ENCODE measurements at regions of chr12 and their contacts with region 1.

Region 1: GRCh38 chr12:116277393-116278278 is at the start of gene MED13L:
- DNase-seq: peak; percentile 87
- H3K4me3 ChIP-seq: peak within 1 kb of the TSS; percentile 63 to 72
- H3K27ac ChIP-seq: peak within 1 kb of the TSS; percentile 89 to 94
- H3K4me1 ChIP-seq: no peaks in the 10 kb centered on the region
- H3K27me3 ChIP-seq: no peaks in the 10 kb centered on the region
- CTCF ChIP-seq: peak; percentile 28 to 62 (median 52)
- POLR2A ChIP-seq: peak; percentile 31
- total RNA-seq, gene MED13L: 88.9 to 140 TPM

Region 2: GRCh38 chr12:115898670-115899069 is 379.0 kb before region 1 on chr12:
- intact Hi-C with region 1: no loop called
- DNase-seq: no peak
- H3K4me3 ChIP-seq: no peak overlapping the region
- H3K27ac ChIP-seq: no peak overlapping the region
- H3K4me1 ChIP-seq: no peaks in the 10 kb centered on the region
- H3K27me3 ChIP-seq: no peaks in the 10 kb centered on the region
- CTCF ChIP-seq: no peak
- POLR2A ChIP-seq: no peak

Region 3: GRCh38 chr12:116053479-116054200 is 224.0 kb before region 1 on chr12:
- intact Hi-C with region 1: no loop called
- DNase-seq: no peak
- H3K4me3 ChIP-seq: no peak overlapping the region
- H3K27ac ChIP-seq: no peak overlapping the region
- H3K4me1 ChIP-seq: no peaks in the 10 kb centered on the region
- H3K27me3 ChIP-seq: no peaks in the 10 kb centered on the region
- CTCF ChIP-seq: no peak
- POLR2A ChIP-seq: no peak

Region 4: DNA sequence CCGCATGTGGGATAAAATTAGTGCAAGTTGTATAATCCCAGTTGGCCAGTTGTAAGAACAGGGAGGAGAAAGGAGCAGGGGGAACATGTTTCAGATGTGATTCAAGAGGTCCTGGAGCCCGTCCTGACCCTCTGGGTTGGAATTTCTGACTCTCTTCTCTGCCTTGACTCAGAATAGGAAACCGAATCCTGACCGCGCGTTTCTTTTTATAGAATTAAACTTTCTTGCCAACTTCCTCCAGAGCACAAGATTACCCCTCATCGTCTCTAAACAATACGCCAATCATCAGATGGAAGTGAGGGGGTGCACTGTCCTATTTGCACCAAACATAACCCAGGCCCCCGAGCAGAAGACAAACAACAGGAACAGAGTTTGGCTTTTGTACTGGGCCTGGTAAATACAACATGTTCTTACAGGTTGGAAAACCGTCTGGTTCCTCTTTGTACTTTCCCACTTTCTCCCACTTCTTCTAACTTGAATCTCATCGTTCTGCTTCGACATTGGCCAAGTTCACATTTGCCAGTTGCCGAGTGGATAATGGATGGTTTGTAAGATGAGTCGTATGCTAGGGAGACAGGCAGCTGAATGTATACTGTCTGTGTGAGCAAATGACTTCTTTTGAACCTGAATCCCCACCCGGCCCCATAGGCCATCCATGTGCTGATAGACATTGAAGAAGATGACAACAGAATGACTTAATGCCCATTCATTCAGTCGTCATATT is 42.4 kb after region 1 on chr12:
- intact Hi-C with region 1: loop called (anchors 2 kb)
- DNase-seq: peak; percentile 70
- H3K4me3 ChIP-seq: no peak overlapping the region
- H3K27ac ChIP-seq: peak overlapping the region; percentile 60 to 81
- H3K4me1 ChIP-seq: peaks cover 2% of the 10 kb centered on the region
- H3K27me3 ChIP-seq: no peaks in the 10 kb centered on the region
- CTCF ChIP-seq: no peak
- POLR2A ChIP-seq: no peak

Region 5: DNA sequence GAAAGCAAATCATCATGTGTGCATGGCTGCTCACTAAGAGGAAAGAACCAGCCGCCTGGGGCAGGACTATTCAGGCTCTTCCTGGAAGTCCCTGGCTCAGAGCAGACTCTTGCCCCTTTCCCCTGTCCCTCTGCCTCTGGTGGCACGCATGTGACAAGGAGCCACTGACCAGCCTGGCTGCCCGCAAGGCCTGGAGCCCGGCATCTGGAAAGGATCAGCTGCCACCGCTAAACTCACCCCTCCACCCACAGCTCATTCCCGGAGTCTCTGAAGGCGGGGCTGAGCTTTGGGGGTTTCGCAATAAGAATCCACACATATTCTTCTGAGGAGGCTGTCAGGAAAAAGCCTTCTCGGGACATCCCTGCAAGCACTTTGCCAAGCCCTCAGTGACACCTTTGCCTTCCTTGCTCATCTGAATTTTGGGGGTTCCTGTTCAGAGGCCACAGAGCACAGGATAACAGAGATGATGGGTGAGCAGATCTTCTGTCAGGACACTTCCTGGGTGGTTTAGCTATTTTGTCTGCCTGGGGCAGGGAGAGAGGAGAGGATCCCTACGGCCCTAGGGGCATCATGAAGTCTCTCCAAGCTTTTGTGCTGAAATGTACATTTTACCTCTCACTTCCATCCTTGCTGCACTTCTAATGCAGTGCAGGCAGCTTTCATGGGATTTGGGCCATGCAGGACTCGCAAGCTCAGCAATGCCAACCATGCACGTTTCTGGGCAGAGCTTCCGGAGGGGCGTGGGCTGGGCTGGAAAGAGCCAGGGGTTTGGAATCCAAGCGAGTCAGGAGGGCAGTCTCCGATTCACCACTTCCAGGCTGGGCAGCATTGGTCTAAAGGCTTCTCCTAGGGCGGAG is 156.7 kb after region 1 on chr12:
- intact Hi-C with region 1: loop called (anchors 10 kb)
- DNase-seq: peak; percentile 80
- H3K4me3 ChIP-seq: no peak overlapping the region
- H3K27ac ChIP-seq: no peak overlapping the region
- H3K4me1 ChIP-seq: no peaks in the 10 kb centered on the region
- H3K27me3 ChIP-seq: no peaks in the 10 kb centered on the region
- CTCF ChIP-seq: peak in 1 of 4 experiments; percentile 9
- POLR2A ChIP-seq: no peak

Region 6: DNA sequence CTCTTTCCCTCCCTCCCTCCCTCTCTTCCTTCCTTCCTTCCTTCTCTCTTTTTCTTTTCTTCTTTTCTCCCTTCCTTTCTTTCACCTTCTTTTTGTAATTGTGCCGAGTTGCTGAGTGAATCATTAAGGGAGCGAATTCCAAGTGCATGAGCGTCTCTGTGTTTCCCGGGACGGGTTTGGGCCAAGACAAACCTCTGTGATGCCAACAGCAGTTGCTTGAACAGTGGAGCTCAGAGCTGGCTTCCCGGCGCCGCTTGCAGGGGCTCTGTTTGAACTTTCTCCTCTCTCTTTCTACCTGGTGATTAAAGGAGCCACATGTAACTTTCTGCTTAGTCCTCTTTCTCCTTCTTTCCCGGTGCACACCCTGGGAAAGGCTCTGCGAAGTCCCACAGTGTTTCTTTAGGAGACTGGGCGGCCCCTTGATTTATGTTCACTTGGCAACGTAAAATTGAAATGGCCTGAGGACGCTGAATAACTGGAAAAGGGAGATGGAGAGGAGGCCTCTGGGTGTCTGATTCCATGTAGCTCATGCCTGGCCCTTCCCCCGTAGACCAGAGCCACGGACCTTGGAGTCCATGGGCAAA is 247.9 kb after region 1 on chr12:
- intact Hi-C with region 1: loop called (anchors 5 kb)
- DNase-seq: peak; percentile 84
- H3K4me3 ChIP-seq: peak overlapping the region in 1 of 2 donors; percentile 6
- H3K27ac ChIP-seq: peak overlapping the region; percentile 68 to 70
- H3K4me1 ChIP-seq: peaks cover 9% of the 10 kb centered on the region
- H3K27me3 ChIP-seq: no peaks in the 10 kb centered on the region
- CTCF ChIP-seq: no peak
- POLR2A ChIP-seq: no peak

Region 7: GRCh38 chr12:116813278-116814041 is 535.8 kb after region 1 on chr12:
- intact Hi-C with region 1: no loop called
- DNase-seq: no peak
- H3K4me3 ChIP-seq: no peak overlapping the region
- H3K27ac ChIP-seq: no peak overlapping the region
- H3K4me1 ChIP-seq: no peaks in the 10 kb centered on the region
- H3K27me3 ChIP-seq: no peaks in the 10 kb centered on the region
- CTCF ChIP-seq: no peak
- POLR2A ChIP-seq: no peak

Measured in prostate gland (tissue), 2 donors.